Right cardiac atrium (tissue), 5 donors: ENCODE measurements at regions of chr9 and their contacts with region 1.

Region 1: DNA sequence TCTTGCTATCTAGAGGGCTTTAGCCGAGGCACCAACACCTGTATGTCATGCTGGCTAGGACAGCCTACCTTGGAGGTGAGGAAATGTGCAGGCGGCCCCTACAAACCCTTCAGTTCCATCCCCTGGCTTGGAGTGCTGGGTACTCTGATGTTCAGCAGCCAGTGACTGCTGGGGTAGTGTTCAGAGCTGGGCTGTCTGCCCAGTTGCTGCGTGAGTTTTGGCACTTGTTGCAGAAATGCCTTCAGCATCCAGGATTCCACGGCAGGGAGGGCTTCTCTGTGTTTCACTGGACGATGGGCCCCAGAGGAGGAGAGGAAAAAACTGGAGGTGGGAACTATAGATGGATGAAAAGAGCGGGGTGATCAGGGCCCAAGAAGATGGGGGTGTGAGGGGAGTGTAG is 10.4 kb downstream of the SWI5 start:
- DNase-seq: peak; percentile 52 to 82 (median 80)
- ATAC-seq: peak; percentile 53 to 73
- H3K4me3 ChIP-seq: no peak overlapping the region
- H3K27ac ChIP-seq: no peak overlapping the region
- H3K4me1 ChIP-seq: no peaks in the 10 kb centered on the region
- H3K27me3 ChIP-seq: no peaks in the 10 kb centered on the region

Region 2: GRCh38 chr9:128218518-128219389 is 67.7 kb before region 1 on chr9:
- intact Hi-C with region 1: no loop called
- DNase-seq: peak; percentile 95 to 98 (median 97)
- ATAC-seq: peak; percentile 94 to 95
- H3K4me3 ChIP-seq: peak overlapping the region; percentile 8
- H3K27ac ChIP-seq: no peak overlapping the region
- H3K4me1 ChIP-seq: no peaks in the 10 kb centered on the region
- H3K27me3 ChIP-seq: no peaks in the 10 kb centered on the region

Region 3: GRCh38 chr9:128361986-128362646 is 75.7 kb after region 1 on chr9:
- intact Hi-C with region 1: no loop called
- DNase-seq: peak; percentile 85 to 94 (median 90)
- ATAC-seq: peak; percentile 89 to 90
- H3K4me3 ChIP-seq: peak overlapping the region; percentile 5
- H3K27ac ChIP-seq: peak overlapping the region; percentile 34
- H3K4me1 ChIP-seq: no peaks in the 10 kb centered on the region
- H3K27me3 ChIP-seq: no peaks in the 10 kb centered on the region

Region 4: DNA sequence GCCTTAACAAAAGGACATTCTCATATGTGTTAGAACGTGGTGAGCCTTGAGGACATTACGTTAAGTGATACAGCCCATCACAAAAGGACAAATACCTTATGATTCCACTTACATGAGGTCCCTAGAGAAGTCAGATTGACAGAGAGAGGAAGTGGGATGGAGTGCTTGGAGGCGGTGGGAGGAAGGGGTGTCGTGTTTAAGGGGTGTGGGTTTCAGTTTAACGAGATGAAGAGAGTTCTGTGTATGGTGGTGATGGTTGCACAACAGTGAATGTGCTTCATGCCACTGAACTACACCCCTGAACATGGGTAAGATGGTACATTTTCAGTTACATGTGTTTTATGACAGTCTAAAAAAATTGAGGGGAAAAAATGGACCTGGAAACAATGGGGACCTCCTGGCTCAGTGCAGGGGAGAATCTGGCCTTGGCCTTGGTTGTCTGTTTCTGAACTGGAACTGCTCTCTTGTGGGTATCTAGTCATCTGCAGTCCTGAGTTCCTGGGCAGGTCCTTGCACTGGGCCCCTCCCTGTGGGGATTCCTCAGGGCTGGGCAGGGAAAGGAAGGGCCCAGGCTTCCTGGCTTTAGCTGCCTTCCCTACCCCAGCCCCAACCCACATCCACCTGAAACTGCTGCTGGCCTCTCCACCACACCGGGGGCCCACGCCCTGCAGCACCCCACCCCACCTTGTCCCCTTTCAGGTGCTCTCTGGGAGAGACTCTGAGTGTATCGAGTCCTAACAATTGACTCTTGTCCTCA is 613.3 kb after region 1 on chr9:
- intact Hi-C with region 1: loop called in 1 of 4 experiments (anchors 5 kb)
- DNase-seq: peak in 1 of 3 donors; percentile 47
- ATAC-seq: peak; percentile 20 to 63
- H3K4me3 ChIP-seq: no peak overlapping the region
- H3K27ac ChIP-seq: peak overlapping the region; percentile 25
- H3K4me1 ChIP-seq: peaks cover 14% of the 10 kb centered on the region
- H3K27me3 ChIP-seq: no peaks in the 10 kb centered on the region